PC-3 (cell line): ENCODE measurements at regions of chr10 and their contacts with region 1.

Region 1: DNA sequence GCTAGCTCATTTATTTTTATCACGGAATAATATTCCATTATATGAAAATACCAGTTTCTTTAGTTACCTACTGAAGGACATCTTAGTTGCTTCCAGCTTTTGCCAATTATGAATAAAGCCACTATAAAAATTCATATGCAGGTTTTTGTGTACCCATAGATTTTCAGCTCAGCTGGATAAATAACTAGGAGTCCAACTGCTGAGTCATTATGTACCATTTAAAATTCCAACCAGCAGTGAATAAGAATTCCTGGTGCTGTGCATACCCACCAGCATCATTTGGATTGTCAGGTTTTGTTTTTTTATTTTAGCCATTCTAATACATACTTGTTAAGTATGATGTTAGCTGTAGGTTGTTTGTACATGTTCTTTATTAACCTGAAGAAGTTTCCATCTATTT is 14.5 kb downstream of the FAM24B start:
- DNase-seq: peak; percentile 84
- ATAC-seq: peak; percentile 85
- H3K4me3 ChIP-seq: no peak overlapping the region
- H3K27ac ChIP-seq: peak overlapping the region; percentile 65
- H3K4me1 ChIP-seq: peaks cover 44% of the 10 kb centered on the region
- H3K27me3 ChIP-seq: no peaks in the 10 kb centered on the region
- CTCF ChIP-seq: no peak

Region 2: GRCh38 chr10:122953827-122954730 is 89.2 kb after region 1 on chr10 and contains the start of gene C10orf88:
- CTCF ChIA-PET with region 1: no interaction called
- POLR2A ChIA-PET with region 1: no interaction called
- intact Hi-C with region 1: loop called (anchors 5 kb)
- DNase-seq: peak; percentile 95
- ATAC-seq: peak; percentile 99
- H3K4me3 ChIP-seq: peak within 1 kb of the TSS; percentile 91
- H3K27ac ChIP-seq: no peak within 1 kb of the TSS
- H3K4me1 ChIP-seq: peaks cover 14% of the 10 kb centered on the region; the same call in 1 of the 2 replicates
- H3K27me3 ChIP-seq: no peaks in the 10 kb centered on the region
- CTCF ChIP-seq: no peak
- total RNA-seq, gene C10orf88: 4.5 and 6.2 TPM in 2 replicates